Ovary (tissue), 10 donors: ENCODE measurements at regions of chr2 and their contacts with region 1.

Region 1: DNA sequence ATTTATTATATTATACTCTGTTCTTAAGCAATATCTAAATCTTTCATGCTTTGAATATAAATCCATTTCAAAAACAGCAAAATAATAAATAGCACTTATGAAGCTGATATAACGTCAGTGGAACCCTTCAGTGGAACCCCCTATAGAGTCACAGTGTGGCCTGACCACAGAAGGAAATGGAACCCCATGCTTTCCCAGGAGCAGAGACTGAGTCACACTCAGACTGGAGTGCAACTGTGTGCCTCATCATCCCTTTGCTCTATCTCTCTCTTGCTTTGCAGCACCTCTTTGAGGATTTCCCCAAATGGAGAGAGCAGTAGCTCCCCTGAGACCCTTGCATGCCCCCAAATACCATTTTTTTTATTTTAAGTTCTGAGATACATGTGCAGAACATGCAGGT is 13.1 kb downstream of the NXPH2 start:
- DNase-seq: no peak
- H3K4me3 ChIP-seq: no peak overlapping the region
- H3K27ac ChIP-seq: no peak overlapping the region
- H3K4me1 ChIP-seq: no peaks in the 10 kb centered on the region
- H3K27me3 ChIP-seq: no peaks in the 10 kb centered on the region
- CTCF ChIP-seq: no peak
- EP300 ChIP-seq: no peak
- POLR2A ChIP-seq: no peak

Region 2: GRCh38 chr2:138741851-138742250 is 25.2 kb before region 1 on chr2:
- intact Hi-C with region 1: loop called in 1 of 4 experiments (anchors 2 kb)
- DNase-seq: no peak
- H3K4me3 ChIP-seq: no peak overlapping the region
- H3K27ac ChIP-seq: no peak overlapping the region
- H3K4me1 ChIP-seq: no peaks in the 10 kb centered on the region
- H3K27me3 ChIP-seq: no peaks in the 10 kb centered on the region
- CTCF ChIP-seq: no peak
- EP300 ChIP-seq: no peak
- POLR2A ChIP-seq: no peak

Region 3: GRCh38 chr2:139963863-139964355 is 1196.8 kb after region 1 on chr2:
- intact Hi-C with region 1: no loop called
- DNase-seq: no peak
- H3K4me3 ChIP-seq: no peak overlapping the region
- H3K27ac ChIP-seq: no peak overlapping the region
- H3K4me1 ChIP-seq: no peaks in the 10 kb centered on the region
- H3K27me3 ChIP-seq: no peaks in the 10 kb centered on the region
- CTCF ChIP-seq: no peak
- EP300 ChIP-seq: no peak
- POLR2A ChIP-seq: no peak